Testis (tissue), 5 donors: ENCODE measurements at regions of chr22 and their contacts with region 1.

Region 1: GRCh38 chr22:38051900-38052862 is 5.0 kb upstream of the PICK1 start:
- DNase-seq: peak; percentile 87
- H3K4me3 ChIP-seq: no peak overlapping the region
- H3K27ac ChIP-seq: no peak overlapping the region
- H3K4me1 ChIP-seq: peaks cover 10% of the 10 kb centered on the region
- H3K27me3 ChIP-seq: no peaks in the 10 kb centered on the region
- CTCF ChIP-seq: peak; percentile 87 to 89 (median 89)
- POLR2A ChIP-seq: no peak

Region 2: DNA sequence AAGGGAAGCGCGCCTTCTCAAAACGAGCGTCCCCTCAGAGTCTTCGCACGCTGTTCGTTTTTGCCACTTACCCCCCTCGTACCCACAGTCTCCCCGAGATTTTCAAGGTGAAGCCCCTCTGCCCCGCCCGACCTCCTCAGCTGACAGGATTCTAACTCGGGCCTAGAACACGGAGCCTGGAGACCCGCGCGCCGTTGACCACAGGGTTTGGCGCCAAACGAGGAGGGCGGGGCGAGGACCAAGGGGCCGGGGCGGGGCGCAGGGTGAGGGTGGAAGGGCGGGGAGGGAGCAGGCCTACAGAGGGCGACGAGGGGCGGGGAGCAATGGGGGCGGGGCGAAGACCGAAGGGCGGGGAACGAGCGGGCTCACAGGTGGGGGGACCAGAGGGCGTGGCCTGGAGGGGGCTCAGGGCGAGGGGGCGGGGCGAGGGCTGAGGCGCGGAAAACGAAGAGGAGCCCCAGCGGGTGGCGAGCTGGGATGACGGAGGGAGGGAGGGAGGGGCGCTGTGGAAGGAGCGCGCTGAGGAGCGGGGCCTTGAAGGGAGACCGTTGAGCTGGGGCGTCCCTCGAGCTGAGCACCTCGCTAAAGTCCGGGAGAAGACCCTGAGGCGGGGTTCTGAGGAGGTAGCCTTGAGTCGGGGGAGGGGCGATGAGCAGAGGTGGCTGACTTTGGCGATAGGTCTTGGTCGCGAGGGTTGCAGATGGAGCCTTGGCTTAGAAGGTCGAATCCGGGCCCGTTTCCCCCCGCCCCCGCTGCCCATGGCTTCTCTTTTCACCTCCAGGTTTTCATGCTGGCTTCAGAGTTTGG is 518.0 kb after region 1 on chr22 and contains the start of gene DMC1:
- intact Hi-C with region 1: loop called (anchors 10 kb)
- DNase-seq: peak; percentile 95
- H3K4me3 ChIP-seq: peak within 1 kb of the TSS; percentile 61 to 70
- H3K27ac ChIP-seq: peak within 1 kb of the TSS; percentile 74 to 84
- H3K4me1 ChIP-seq: peaks cover 15% of the 10 kb centered on the region
- H3K27me3 ChIP-seq: no peaks in the 10 kb centered on the region
- CTCF ChIP-seq: no peak
- POLR2A ChIP-seq: no peak
- total RNA-seq, gene DMC1: 8.9 to 17.6 TPM